ENCODE measurements at regions of chr5 and their contacts with region 1.

Region 1: DNA sequence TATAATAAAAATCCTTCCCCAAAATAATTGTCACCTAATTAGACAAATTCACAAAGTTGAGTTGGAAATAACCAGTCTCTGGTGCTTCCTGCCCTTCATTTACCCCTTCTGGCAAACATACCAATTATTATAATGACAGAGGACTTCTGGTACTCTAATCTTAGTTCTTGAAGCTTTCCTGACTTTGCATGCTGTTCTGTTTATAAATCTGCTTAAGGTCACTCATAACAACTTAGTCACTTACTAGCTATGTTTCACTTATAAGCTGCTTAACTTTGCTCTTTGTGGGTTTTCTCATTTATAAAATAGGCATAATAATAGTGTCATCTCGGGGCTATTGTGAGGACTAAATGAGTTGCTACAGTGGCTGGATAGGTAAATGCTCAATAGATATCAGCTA is 446.5 kb downstream of the EFNA5 start:
- DNase-seq: no peak
- H3K4me3 ChIP-seq: no peak overlapping the region
- H3K27ac ChIP-seq: no peak overlapping the region
- H3K4me1 ChIP-seq: no peaks in the 10 kb centered on the region
- CTCF ChIP-seq: no peak

Region 2: DNA sequence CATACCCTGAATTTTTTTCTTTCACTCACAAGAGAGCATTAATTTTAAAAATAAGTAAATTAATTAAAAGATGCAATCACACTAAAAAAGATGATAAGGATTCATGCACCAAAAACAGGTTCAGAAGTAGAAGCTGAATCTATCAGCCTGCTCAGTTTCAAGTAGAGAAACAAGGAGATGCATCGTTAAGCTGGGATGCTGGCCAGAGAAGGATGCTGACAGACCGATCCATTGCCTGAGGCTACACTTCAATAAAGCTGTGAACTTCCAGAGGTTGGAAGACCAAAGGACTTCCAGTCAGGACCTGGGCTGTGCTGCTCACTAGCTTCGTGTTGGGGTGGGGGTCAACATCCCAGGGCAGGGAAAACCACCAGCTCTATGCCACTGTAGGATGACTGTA is 11.2 kb before region 1 on chr5:
- CTCF ChIA-PET with region 1: no interaction called
- POLR2A ChIA-PET with region 1: interaction called, 11 read pairs
- intact Hi-C with region 1: no loop called
- DNase-seq: no peak
- H3K4me3 ChIP-seq: no peak overlapping the region
- H3K27ac ChIP-seq: no peak overlapping the region
- H3K4me1 ChIP-seq: no peaks in the 10 kb centered on the region
- CTCF ChIP-seq: no peak

Region 3: DNA sequence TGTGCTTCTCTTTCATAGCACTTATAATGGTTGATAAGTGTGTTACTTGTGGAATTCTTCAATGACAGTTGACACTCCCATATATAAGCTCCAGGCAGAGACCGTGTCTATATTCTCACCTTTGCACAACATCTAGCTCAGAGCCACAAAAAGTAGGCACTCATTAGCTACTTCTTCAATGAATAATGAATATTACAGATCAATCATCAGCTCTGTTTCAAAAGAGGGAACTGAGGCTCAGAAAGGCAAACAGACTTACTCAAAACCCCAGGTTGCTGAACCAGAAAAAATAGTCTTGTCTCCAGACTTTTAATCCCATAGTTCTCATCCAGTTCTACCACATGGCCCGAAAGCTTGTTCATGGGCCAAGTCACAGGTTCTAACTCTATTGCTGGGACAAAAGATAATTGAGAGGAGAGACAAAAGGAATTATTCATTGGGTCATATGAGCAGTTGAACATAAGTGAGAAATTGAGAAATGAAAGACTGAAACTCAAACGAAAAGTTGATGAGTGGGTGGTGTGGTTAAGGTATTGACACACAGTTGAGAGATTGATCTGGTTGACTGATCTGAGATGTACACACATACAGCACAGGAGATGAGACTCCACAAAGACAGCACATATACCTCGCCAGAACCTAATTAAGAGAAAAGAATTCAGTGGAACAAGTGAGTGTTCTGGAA is 64.9 kb after region 1 on chr5:
- CTCF ChIA-PET with region 1: no interaction called
- POLR2A ChIA-PET with region 1: no interaction called
- intact Hi-C with region 1: no loop called
- DNase-seq: no peak
- H3K4me3 ChIP-seq: no peak overlapping the region
- H3K27ac ChIP-seq: no peak overlapping the region
- H3K4me1 ChIP-seq: peaks cover 23% of the 10 kb centered on the region
- CTCF ChIP-seq: no peak